ENCODE measurements at regions of chr1 and their contacts with region 1.

Region 1: DNA sequence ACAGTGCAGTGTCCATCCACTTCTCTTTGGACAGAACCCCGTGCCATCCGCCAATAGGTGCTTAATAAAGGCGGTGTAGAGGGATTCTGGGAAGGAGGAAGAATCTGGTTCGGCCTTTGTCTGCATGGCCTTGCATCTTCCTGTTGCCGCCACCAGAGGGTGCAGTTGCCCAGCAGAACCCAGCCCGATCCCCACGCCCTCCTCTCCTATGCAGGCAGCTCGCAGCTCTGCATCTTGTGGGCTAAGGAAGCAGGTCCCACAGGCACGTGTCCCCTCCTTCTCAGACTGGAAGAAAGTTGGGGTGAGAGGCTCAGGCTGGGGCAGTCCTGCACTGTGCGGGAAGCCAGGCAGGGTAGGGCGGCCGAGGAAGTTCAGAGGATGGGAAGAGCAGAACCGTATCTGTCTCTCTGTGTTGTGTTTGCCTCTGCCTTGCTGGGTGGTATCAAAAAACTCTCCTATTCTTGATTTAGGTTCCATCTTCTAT is 20.8 kb downstream of the NAV1 start:
- DNase-seq: peak; percentile 82
- H3K4me3 ChIP-seq: no peak overlapping the region
- H3K27ac ChIP-seq: no peak overlapping the region
- H3K4me1 ChIP-seq: peaks cover 50% of the 10 kb centered on the region
- H3K27me3 ChIP-seq: no peaks in the 10 kb centered on the region
- CTCF ChIP-seq: peak; percentile 94 to 97
- POLR2A ChIP-seq: no peak

Region 2: DNA sequence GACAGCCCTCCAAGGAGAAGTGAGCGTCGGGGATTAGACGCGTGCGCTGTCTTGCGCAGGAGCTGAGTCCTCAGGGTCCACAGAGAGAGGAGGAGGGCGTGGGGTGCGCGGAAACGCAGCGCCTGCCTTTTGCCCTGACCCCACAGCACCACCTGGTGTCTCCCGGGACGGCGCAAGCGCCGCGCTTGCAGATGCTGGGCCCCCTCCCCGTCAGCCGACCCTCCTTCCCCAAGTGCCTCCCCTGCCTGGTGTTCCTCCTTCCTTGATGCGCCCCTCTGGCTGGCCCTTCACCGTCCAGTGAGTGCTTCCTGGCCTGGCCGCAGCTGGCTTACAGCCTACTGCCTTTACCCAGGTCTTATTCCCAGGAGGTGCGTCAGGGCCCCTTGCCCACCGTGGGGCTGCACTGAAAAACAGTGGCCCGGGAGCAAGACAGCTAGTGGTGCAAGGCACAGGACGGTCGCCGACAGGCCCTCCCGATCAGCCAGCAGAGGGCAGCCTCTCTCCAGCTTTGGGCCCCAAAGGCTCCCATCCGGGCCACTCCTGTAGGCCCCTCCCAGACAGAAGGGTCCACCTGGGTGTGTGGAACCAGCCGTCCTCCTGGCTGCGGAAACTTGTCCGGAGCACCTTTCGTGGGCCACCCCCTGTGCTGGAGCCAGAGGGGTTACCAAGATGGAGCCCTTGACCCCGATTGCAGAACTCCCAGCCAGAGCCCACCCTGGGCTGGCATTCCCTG is 77.8 kb before region 1 on chr1:
- CTCF ChIA-PET with region 1: interaction called, 10 read pairs
- POLR2A ChIA-PET with region 1: no interaction called
- dilution Hi-C with region 1: no loop called
- intact Hi-C with region 1: loop called (anchors 5 kb)
- DNase-seq: peak; percentile 80
- H3K4me3 ChIP-seq: no peak overlapping the region
- H3K27ac ChIP-seq: no peak overlapping the region
- H3K4me1 ChIP-seq: peaks cover 25% of the 10 kb centered on the region
- H3K27me3 ChIP-seq: peaks cover 0 to 3% of the 10 kb centered on the region in 2 experiments
- CTCF ChIP-seq: peak; percentile 91 to 92
- POLR2A ChIP-seq: no peak

Region 3: GRCh38 chr1:201538612-201539551 is 20.8 kb before region 1 on chr1 and contains the start of gene NAV1:
- CTCF ChIA-PET with region 1: interaction called, 7 read pairs
- POLR2A ChIA-PET with region 1: no interaction called
- dilution Hi-C with region 1: no loop called
- intact Hi-C with region 1: loop called (anchors 1 kb)
- DNase-seq: peak; percentile 84
- H3K4me3 ChIP-seq: peak within 1 kb of the TSS; percentile 70 to 90 (median 85)
- H3K27ac ChIP-seq: peak within 1 kb of the TSS; percentile 93
- H3K4me1 ChIP-seq: peaks cover 74% of the 10 kb centered on the region
- H3K27me3 ChIP-seq: no peaks in the 10 kb centered on the region
- CTCF ChIP-seq: no peak
- POLR2A ChIP-seq: peak; percentile 85
- total RNA-seq, gene NAV1: 136 and 138 TPM in 2 replicates

Region 4: GRCh38 chr1:201637680-201638079 is 78.0 kb after region 1 on chr1:
- CTCF ChIA-PET with region 1: interaction called, 18 read pairs
- POLR2A ChIA-PET with region 1: no interaction called
- dilution Hi-C with region 1: no loop called
- intact Hi-C with region 1: loop called (anchors 1 kb)
- DNase-seq: no peak
- H3K4me3 ChIP-seq: no peak overlapping the region
- H3K27ac ChIP-seq: peak overlapping the region; percentile 91
- H3K4me1 ChIP-seq: peaks cover 56% of the 10 kb centered on the region
- H3K27me3 ChIP-seq: no peaks in the 10 kb centered on the region
- CTCF ChIP-seq: no peak
- POLR2A ChIP-seq: no peak

Region 5: DNA sequence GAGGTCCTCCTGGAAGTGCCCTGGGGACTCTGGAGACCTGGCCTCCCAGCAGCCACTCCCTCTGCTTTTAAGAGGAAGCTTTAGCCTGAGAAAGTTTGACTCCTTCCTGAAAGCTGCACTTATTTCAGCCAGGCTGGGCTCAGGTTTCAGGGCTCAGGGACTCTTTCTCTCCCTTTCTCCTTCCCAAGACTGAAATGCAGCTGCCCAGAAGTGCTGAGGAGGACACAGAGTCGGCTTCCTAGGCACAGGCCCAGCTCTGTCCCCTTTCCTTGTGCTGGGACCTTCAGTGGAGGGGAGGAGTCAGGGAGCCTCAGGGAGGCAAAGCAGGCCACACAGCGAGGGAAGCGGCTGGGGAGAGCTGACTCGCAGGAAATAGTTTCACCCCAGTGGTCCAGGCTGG is 116.5 kb after region 1 on chr1:
- CTCF ChIA-PET with region 1: interaction called, 11 read pairs
- POLR2A ChIA-PET with region 1: no interaction called
- dilution Hi-C with region 1: no loop called
- intact Hi-C with region 1: no loop called
- DNase-seq: peak; percentile 34
- H3K4me3 ChIP-seq: no peak overlapping the region
- H3K27ac ChIP-seq: no peak overlapping the region
- H3K4me1 ChIP-seq: peaks cover 16% of the 10 kb centered on the region
- H3K27me3 ChIP-seq: no peaks in the 10 kb centered on the region
- CTCF ChIP-seq: no peak
- POLR2A ChIP-seq: no peak

Region 6: GRCh38 chr1:201709564-201710295 is 150.0 kb after region 1 on chr1:
- CTCF ChIA-PET with region 1: interaction called, 236 read pairs
- POLR2A ChIA-PET with region 1: no interaction called
- dilution Hi-C with region 1: loop called (anchors 25 kb)
- intact Hi-C with region 1: loop called (anchors 1 kb)
- DNase-seq: peak; percentile 67
- H3K4me3 ChIP-seq: no peak overlapping the region
- H3K27ac ChIP-seq: peak overlapping the region; percentile 0
- H3K4me1 ChIP-seq: peaks cover 36% of the 10 kb centered on the region
- H3K27me3 ChIP-seq: no peaks in the 10 kb centered on the region
- CTCF ChIP-seq: peak; percentile 80 to 97
- POLR2A ChIP-seq: no peak

Measured in endothelial cell of umbilical vein (primary cell).